Sigmoid colon (tissue), 7 donors: ENCODE measurements at regions of chr16 and their contacts with region 1.

Region 1: GRCh38 chr16:86343027-86343787 is 167.1 kb upstream of the FOXF1 start:
- DNase-seq: peak; percentile 97
- H3K4me3 ChIP-seq: peak overlapping the region; percentile 1 to 22 (median 8)
- H3K27ac ChIP-seq: peak overlapping the region; percentile 87 to 96 (median 94)
- H3K4me1 ChIP-seq: peaks cover 0 to 43% (median 40%) of the 10 kb centered on the region in 4 donors
- H3K27me3 ChIP-seq: no peaks in the 10 kb centered on the region
- CTCF ChIP-seq: no peak
- EP300 ChIP-seq: peak; percentile 98 to 100 (median 99)
- POLR2A ChIP-seq: no peak

Region 2: DNA sequence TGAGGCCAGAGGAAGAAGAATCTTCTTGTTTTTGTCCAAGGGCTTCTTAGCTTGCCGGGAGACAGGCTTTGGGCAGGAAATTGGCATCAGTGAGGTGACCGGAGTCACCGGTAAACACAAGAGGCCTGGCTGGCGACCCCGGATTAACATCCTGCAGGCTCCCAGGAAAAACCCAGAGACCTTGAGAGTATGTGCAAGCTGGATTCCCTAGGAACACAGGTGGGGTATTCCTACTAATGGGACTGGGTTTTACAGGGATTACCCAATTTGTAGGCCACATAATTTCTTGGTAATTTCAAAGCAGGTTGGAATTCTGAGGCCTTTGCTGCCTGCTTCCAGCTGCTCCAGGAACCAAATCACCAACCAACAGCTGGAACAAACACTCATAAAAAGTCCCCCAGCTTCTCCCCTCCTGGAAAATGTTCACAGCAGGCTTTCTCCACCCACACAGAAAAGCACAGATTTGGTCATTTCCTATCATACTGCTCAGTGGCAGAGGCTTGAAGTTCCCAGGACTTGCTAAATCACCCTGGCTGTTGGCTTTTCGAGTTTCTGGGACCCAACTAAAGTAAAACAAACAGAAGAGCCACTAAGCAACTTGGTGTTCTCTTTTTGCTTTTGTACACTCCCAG is 185.5 kb before region 1 on chr16:
- intact Hi-C with region 1: loop called (anchors 1 kb)
- DNase-seq: no peak
- H3K4me3 ChIP-seq: no peak overlapping the region
- H3K27ac ChIP-seq: peak overlapping the region in 3 of 4 donors; percentile 87 to 90 (median 89)
- H3K4me1 ChIP-seq: peaks cover 0 to 60% (median 27%) of the 10 kb centered on the region in 4 donors
- H3K27me3 ChIP-seq: no peaks in the 10 kb centered on the region
- CTCF ChIP-seq: no peak
- EP300 ChIP-seq: no peak
- POLR2A ChIP-seq: no peak

Region 3: GRCh38 chr16:86277221-86277620 is 66.0 kb before region 1 on chr16:
- intact Hi-C with region 1: no loop called
- DNase-seq: no peak
- H3K4me3 ChIP-seq: no peak overlapping the region
- H3K27ac ChIP-seq: no peak overlapping the region
- H3K4me1 ChIP-seq: peaks cover 0 to 13% (median 0%) of the 10 kb centered on the region in 4 donors
- H3K27me3 ChIP-seq: no peaks in the 10 kb centered on the region
- CTCF ChIP-seq: no peak
- EP300 ChIP-seq: no peak
- POLR2A ChIP-seq: no peak

Region 4: DNA sequence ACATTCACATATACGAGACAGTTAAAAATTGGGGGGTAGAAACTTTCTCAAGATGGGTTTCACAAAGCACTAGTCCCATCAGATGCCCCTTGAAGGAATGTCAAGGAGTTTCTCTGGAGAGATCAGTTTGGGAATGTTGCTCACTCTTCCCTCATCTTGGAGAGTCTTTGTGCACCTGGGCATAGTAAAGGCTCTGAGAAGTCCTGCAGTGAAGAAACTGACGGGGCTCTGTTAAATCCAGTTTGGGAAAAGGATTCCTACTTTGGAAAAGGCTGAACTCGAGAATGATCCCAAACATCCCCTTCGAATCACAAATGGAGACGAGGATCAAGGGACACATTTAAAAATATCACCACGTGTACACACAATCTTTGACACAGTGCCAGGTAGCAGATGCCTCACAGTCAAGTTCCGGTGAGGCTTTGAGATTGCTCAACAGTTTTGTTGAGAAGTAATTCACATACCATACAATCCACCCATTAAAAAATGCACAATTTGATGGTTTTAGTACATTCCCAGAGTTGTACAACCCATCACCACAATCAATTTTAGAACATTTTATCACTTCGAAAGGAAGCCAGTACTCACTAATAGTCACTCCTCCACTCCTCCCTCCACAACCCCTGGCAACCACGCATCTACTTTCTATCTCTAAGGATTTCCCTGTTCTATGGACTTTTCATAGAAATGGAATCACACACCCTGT is 36.2 kb before region 1 on chr16:
- intact Hi-C with region 1: loop called (anchors 2 kb)
- DNase-seq: peak; percentile 32
- H3K4me3 ChIP-seq: no peak overlapping the region
- H3K27ac ChIP-seq: peak overlapping the region; percentile 25 to 96 (median 94)
- H3K4me1 ChIP-seq: peaks cover 0 to 57% (median 49%) of the 10 kb centered on the region in 4 donors
- H3K27me3 ChIP-seq: no peaks in the 10 kb centered on the region
- CTCF ChIP-seq: no peak
- EP300 ChIP-seq: no peak
- POLR2A ChIP-seq: no peak

Region 5: GRCh38 chr16:86396897-86397296 is 53.7 kb after region 1 on chr16:
- intact Hi-C with region 1: loop called (anchors 1 kb)
- DNase-seq: peak; percentile 95
- H3K4me3 ChIP-seq: peak overlapping the region in 1 of 4 donors; percentile 12
- H3K27ac ChIP-seq: peak overlapping the region; percentile 88 to 94 (median 91)
- H3K4me1 ChIP-seq: peaks cover 0 to 28% (median 23%) of the 10 kb centered on the region in 4 donors
- H3K27me3 ChIP-seq: no peaks in the 10 kb centered on the region
- CTCF ChIP-seq: no peak
- EP300 ChIP-seq: peak; percentile 52 to 92 (median 73)
- POLR2A ChIP-seq: no peak

Region 6: DNA sequence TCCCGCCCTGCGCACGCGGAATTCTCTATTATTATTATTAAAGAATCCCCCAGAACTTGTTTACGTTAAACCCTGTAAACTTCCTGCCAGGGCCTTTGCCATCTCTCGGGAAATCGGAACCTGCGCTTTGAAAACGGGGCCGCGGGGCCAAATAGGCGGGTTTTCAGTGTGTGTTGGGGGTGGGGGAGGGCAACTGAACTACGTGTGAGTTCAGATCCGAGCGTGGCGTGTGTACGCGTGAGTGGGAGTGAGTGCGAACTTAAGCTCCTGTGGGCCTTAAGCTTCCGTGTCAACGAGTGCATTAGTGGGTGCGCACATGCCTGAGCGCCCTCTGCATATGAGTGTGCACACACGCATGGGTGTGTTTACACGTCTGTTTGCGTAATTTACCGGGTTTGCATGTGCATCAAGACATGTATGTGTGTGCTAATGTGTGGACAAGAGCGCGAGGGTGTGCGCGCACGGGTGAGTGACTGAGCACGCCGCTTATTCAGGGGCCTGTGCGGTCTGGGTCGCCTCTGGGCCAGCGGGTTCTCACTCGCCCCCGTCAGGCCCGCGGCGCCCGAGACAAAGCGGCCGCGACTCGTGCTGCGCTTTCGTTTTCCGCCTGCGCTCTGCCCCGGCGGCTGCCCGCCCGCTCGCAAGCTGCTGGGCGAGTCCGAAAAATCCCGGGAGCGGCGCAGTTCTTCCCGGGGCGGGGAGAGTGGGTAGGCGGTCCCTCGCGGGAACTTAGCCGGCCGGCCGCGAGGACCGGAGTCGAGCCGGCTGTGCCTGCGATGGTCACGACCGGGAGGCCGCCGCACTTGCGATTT is 165.9 kb after region 1 on chr16:
- intact Hi-C with region 1: loop called (anchors 2 kb)
- DNase-seq: peak; percentile 93
- H3K4me3 ChIP-seq: peak overlapping the region; percentile 81 to 95 (median 86)
- H3K27ac ChIP-seq: peak overlapping the region; percentile 99 to 100 (median 99)
- H3K4me1 ChIP-seq: peaks cover 0 to 27% (median 3%) of the 10 kb centered on the region in 4 donors
- H3K27me3 ChIP-seq: peaks cover 0 to 4% (median 0%) of the 10 kb centered on the region in 3 donors
- CTCF ChIP-seq: no peak
- EP300 ChIP-seq: peak in 3 of 4 donors; percentile 6 to 35 (median 33)
- POLR2A ChIP-seq: peak; percentile 24 to 40

Region 7: GRCh38 chr16:86545954-86546637 is 202.9 kb after region 1 on chr16:
- intact Hi-C with region 1: no loop called
- DNase-seq: peak; percentile 46
- H3K4me3 ChIP-seq: no peak overlapping the region
- H3K27ac ChIP-seq: no peak overlapping the region
- H3K4me1 ChIP-seq: no peaks in the 10 kb centered on the region
- H3K27me3 ChIP-seq: no peaks in the 10 kb centered on the region
- CTCF ChIP-seq: no peak
- EP300 ChIP-seq: no peak
- POLR2A ChIP-seq: no peak